PC-9 (cell line): ENCODE measurements at regions of chr11 and their contacts with region 1.

Region 1: GRCh38 chr11:35617687-35618496 is at the start of gene FJX1:
- DNase-seq: peak; percentile 42 to 74
- H3K4me3 ChIP-seq: peak within 1 kb of the TSS; percentile 66
- H3K27ac ChIP-seq: peak within 1 kb of the TSS; percentile 42
- H3K4me1 ChIP-seq: peaks cover 49% of the 10 kb centered on the region
- H3K27me3 ChIP-seq: no peaks in the 10 kb centered on the region
- CTCF ChIP-seq: no peak
- total RNA-seq, gene FJX1: 14.8 and 17.5 TPM in 2 replicates

Region 2: DNA sequence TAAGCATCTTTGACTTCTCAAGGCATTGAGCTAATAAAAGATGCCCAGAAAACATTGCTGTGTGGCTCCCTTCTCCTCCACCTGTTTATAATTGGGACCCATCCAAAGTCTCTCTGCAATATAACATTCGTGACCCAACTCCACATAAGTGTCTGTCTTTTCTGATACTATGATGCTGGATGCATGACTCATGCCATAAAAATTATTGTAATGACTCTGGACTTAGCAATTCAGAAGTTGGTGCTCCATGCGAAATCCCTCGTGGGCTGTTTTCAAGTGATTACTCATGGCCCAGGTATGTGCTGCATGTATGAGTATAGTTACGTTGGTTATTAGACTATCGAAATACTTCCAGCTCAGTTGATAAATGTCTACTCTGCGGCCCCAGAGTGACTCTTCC is 12.0 kb after region 1 on chr11:
- CTCF ChIA-PET with region 1: interaction called, 3 read pairs
- POLR2A ChIA-PET with region 1: no interaction called
- intact Hi-C with region 1: loop called (anchors 1 kb)
- DNase-seq: peak; percentile 79 to 98
- H3K4me3 ChIP-seq: 0 out of 2 replicates have a peak overlapping the region, but pooled peaks have one; percentile 10
- H3K27ac ChIP-seq: peak overlapping the region; percentile 49
- H3K4me1 ChIP-seq: peaks cover 18% of the 10 kb centered on the region
- H3K27me3 ChIP-seq: no peaks in the 10 kb centered on the region
- CTCF ChIP-seq: no peak

Region 3: DNA sequence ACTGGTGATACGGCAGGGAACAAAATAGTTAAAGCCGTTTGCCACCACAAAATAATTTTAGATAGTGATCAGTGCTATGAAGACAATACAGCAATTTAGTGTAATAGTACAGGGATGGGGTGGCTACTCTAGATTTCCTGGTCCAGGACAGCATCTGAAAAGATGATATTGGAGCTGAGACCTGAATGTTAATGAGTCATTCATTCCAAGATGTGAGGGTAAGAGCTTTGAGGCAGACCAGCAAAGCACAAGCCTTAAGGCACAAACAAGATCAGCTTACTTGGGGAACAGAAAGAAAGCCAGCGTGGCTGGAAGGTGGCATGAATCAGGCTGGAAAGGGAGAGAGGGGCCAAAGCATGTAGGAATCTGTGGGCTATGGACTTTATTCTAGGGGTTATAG is 177.0 kb after region 1 on chr11:
- CTCF ChIA-PET with region 1: no interaction called
- POLR2A ChIA-PET with region 1: no interaction called
- intact Hi-C with region 1: loop called (anchors 2 kb)
- DNase-seq: peak; percentile 46 to 83
- H3K4me3 ChIP-seq: no peak overlapping the region
- H3K27ac ChIP-seq: peak overlapping the region; percentile 30
- H3K4me1 ChIP-seq: peaks cover 56% of the 10 kb centered on the region
- H3K27me3 ChIP-seq: no peaks in the 10 kb centered on the region
- CTCF ChIP-seq: no peak

Region 4: GRCh38 chr11:35927730-35928129 is 309.8 kb after region 1 on chr11:
- CTCF ChIA-PET with region 1: interaction called, 3 read pairs
- POLR2A ChIA-PET with region 1: no interaction called
- intact Hi-C with region 1: loop called (anchors 10 kb)
- DNase-seq: peak; percentile 95 to 99
- H3K4me3 ChIP-seq: peak overlapping the region; percentile 47; the same call in 1 of the 2 replicates
- H3K27ac ChIP-seq: peak overlapping the region; percentile 91
- H3K4me1 ChIP-seq: peaks cover 37% of the 10 kb centered on the region
- H3K27me3 ChIP-seq: no peaks in the 10 kb centered on the region
- CTCF ChIP-seq: no peak

Region 5: GRCh38 chr11:36056160-36056751 is 438.4 kb after region 1 on chr11:
- CTCF ChIA-PET with region 1: no interaction called
- POLR2A ChIA-PET with region 1: no interaction called
- intact Hi-C with region 1: loop called (anchors 1 kb)
- DNase-seq: peak; percentile 42 to 46
- H3K4me3 ChIP-seq: no peak overlapping the region
- H3K27ac ChIP-seq: no peak overlapping the region
- H3K4me1 ChIP-seq: no peaks in the 10 kb centered on the region
- H3K27me3 ChIP-seq: no peaks in the 10 kb centered on the region
- CTCF ChIP-seq: peak; percentile 79

Region 6: GRCh38 chr11:36478700-36479329 is 860.9 kb after region 1 on chr11:
- CTCF ChIA-PET with region 1: no interaction called
- POLR2A ChIA-PET with region 1: no interaction called
- intact Hi-C with region 1: loop called (anchors 5 kb)
- DNase-seq: peak; percentile 47 to 51
- H3K4me3 ChIP-seq: no peak overlapping the region
- H3K27ac ChIP-seq: no peak overlapping the region
- H3K4me1 ChIP-seq: 0 out of 2 replicates have a peak, but pooled peaks cover 3% of the 10 kb centered on the region
- H3K27me3 ChIP-seq: no peaks in the 10 kb centered on the region
- CTCF ChIP-seq: peak; percentile 88